Panc1 (cell line): ENCODE measurements at regions of chr14 and their contacts with region 1.

Region 1: DNA sequence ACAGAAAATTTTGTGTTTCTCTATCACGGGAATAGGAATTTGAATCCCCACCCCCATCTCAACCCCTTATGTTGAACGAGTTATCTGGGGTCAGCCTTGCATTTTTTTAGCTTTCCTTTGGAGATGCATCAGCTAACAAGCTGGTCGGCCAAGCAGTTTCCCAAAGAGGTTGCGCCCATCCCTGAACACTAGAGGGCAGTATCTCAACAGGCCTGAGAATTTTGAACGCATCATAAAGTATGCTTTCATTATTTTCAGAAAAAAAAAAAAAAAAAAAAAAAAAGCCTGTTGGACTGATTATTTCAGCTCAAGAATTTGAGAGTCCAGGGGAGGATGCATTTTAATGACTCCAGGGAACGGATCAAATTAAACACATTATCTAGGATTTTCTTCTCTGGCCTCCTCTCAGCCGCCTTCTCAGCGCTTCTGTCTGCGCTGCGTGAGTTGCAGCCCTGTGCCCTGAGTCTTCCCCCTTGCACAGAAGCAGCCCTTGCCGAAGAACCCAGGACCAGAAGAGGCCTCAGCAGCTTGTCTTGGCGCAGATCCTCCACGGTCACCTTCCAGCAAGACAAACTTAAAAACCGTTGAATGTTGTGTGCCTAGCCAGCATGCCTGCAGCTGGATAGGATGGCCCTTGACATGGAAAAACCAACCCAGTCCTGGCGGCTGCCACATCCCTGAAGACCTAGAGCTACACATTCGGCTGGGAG is 76.6 kb upstream of the GZMB start:
- DNase-seq: no peak
- ATAC-seq: no peak
- H3K4me3 ChIP-seq: no peak overlapping the region
- H3K27ac ChIP-seq: no peak overlapping the region
- H3K4me1 ChIP-seq: no peaks in the 10 kb centered on the region
- H3K27me3 ChIP-seq: no peaks in the 10 kb centered on the region; the same call in 1 of the 2 replicates
- CTCF ChIP-seq: peak; percentile 87

Region 2: DNA sequence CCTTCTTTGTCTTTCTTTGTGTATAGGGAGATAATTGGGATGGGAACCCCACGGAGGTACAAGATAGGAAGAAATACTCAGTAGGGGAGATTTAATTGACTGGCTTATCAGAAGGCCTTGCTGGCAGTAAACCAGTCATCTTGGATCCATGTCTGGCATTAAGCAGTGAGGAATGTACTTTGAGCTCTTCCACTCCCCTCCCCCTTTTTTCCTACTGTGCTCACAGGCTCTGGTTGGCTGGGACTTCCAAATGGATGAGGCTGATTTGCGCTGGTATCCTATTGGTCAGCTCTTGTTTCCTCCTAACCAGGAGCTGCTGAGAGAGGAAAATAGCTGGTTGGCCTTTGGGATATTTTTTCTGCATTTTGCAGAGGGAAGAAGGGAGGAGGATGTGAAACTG is 1216.3 kb before region 1 on chr14:
- CTCF ChIA-PET with region 1: no interaction called
- POLR2A ChIA-PET with region 1: no interaction called
- in situ Hi-C with region 1: no loop called
- intact Hi-C with region 1: no loop called
- DNase-seq: no peak
- ATAC-seq: no peak
- H3K4me3 ChIP-seq: no peak overlapping the region
- H3K27ac ChIP-seq: no peak overlapping the region
- H3K4me1 ChIP-seq: no peaks in the 10 kb centered on the region
- H3K27me3 ChIP-seq: no peaks in the 10 kb centered on the region
- CTCF ChIP-seq: no peak

Region 3: GRCh38 chr14:24481622-24482324 is 228.8 kb before region 1 on chr14:
- CTCF ChIA-PET with region 1: interaction called, 11 read pairs
- POLR2A ChIA-PET with region 1: no interaction called
- in situ Hi-C with region 1: no loop called
- intact Hi-C with region 1: no loop called
- DNase-seq: peak; percentile 8
- ATAC-seq: peak; percentile 87
- H3K4me3 ChIP-seq: no peak overlapping the region
- H3K27ac ChIP-seq: no peak overlapping the region
- H3K4me1 ChIP-seq: no peaks in the 10 kb centered on the region
- H3K27me3 ChIP-seq: no peaks in the 10 kb centered on the region
- CTCF ChIP-seq: peak; percentile 82

Region 4: DNA sequence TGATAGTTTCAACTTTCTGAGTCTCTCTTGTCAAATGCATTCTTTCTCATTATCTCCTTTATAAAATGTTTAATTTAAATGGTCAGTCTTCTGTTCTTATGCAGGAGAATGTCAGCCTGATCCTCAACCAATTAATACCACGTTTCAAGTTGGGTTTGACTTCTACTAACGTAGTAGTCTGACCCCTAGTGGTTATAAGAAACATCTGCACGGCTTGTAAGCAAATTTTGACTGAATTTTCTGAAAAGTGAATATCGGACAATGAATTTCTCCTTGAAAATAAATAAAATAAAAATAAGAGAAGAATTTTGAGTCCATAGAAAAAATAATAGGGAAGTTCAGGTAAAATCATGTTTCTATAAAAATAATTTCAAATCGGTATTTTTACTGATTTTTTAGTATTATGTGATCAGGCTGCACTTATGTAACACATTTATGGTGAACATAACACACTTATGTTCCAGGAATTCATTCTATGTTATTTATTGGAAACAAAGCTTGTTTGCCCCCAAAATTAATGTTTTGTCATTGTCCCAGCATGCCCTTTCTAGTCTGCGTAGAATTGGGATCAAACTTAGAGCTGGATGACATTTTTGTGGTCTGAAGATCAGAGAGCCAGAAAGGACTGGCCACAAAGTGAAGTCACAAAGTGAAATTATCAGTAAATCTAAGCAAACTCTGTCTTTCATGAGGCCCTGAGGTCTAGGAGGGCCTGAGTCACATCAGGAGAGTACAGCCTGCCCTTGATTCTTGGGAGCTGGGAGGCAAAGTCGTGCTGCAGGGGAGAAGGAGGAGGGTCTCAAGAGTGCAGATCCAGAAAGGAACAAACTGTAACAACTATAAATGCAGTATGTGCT is 440.6 kb after region 1 on chr14:
- CTCF ChIA-PET with region 1: interaction called, 19 read pairs
- POLR2A ChIA-PET with region 1: no interaction called
- in situ Hi-C with region 1: no loop called
- intact Hi-C with region 1: loop called (anchors 5 kb)
- DNase-seq: peak; percentile 15
- ATAC-seq: no peak
- H3K4me3 ChIP-seq: no peak overlapping the region
- H3K27ac ChIP-seq: no peak overlapping the region
- H3K4me1 ChIP-seq: no peaks in the 10 kb centered on the region
- H3K27me3 ChIP-seq: no peaks in the 10 kb centered on the region
- CTCF ChIP-seq: peak; percentile 66; the same call in 1 of the 2 replicates

Region 5: DNA sequence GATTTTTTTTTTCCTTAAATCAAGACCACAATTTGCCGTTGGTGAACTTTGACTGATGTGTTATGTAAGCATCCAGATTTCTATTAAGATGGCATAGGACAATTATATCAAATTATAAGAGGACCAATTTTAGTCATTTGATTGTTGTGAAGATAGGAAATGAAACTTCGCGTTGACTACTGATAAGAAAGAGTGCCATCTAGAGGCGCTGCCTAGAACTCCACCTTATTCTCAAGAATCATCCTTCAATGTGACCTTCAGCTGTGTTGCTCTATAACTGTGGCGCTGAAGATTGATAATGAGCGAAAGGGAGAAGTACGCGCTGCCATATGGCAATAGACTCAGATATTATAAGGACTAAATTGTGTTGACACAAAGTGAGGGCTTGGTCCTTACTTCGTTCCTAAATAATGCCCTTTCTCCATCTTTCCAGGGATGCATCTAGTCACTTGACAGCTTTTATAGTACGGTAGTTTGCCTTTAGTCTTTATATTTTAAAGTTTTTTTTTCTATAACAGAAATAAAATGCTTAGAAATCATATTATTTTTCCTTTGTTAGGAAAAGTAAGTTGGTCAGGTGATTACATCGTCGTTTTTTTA is 690.1 kb after region 1 on chr14:
- CTCF ChIA-PET with region 1: interaction called, 14 read pairs
- POLR2A ChIA-PET with region 1: no interaction called
- in situ Hi-C with region 1: no loop called
- intact Hi-C with region 1: no loop called
- DNase-seq: peak; percentile 15
- ATAC-seq: no peak
- H3K4me3 ChIP-seq: no peak overlapping the region
- H3K27ac ChIP-seq: no peak overlapping the region
- H3K4me1 ChIP-seq: no peaks in the 10 kb centered on the region
- H3K27me3 ChIP-seq: no peaks in the 10 kb centered on the region; the same call in 1 of the 2 replicates
- CTCF ChIP-seq: peak; percentile 71